BJ (cell line): ENCODE measurements at regions of chr11 and their contacts with region 1.

Region 1: GRCh38 chr11:65720237-65720934 is at the start of gene RNASEH2C:
- DNase-seq: peak; percentile 30
- H3K4me3 ChIP-seq: peak within 1 kb of the TSS; percentile 60
- H3K27me3 ChIP-seq: no peaks in the 10 kb centered on the region
- CTCF ChIP-seq: no peak
- polyA plus RNA-seq, gene RNASEH2C: 28.0 and 33.9 TPM in 2 replicates

Region 2: GRCh38 chr11:65730484-65730883 is 10.1 kb after region 1 on chr11:
- CTCF ChIA-PET with region 1: no interaction called
- POLR2A ChIA-PET with region 1: no interaction called
- DNase-seq: no peak
- H3K4me3 ChIP-seq: no peak overlapping the region
- H3K27me3 ChIP-seq: peaks cover 2% of the 10 kb centered on the region
- CTCF ChIP-seq: no peak

Region 3: GRCh38 chr11:65773784-65774411 is 53.5 kb after region 1 on chr11:
- CTCF ChIA-PET with region 1: interaction called, 20 read pairs
- POLR2A ChIA-PET with region 1: no interaction called
- DNase-seq: no peak
- H3K4me3 ChIP-seq: no peak overlapping the region
- H3K27me3 ChIP-seq: no peaks in the 10 kb centered on the region
- CTCF ChIP-seq: peak; percentile 18; the same call in 1 of the 2 replicates